ENCODE measurements at regions of chr12 and their contacts with region 1.

Region 1: GRCh38 chr12:50504798-50505385 is at the start of gene DIP2B:
- DNase-seq: peak; percentile 96
- H3K4me3 ChIP-seq: peak within 1 kb of the TSS; percentile 71
- H3K27ac ChIP-seq: peak within 1 kb of the TSS; percentile 89
- H3K4me1 ChIP-seq: peaks cover 12% of the 10 kb centered on the region
- H3K27me3 ChIP-seq: no peaks in the 10 kb centered on the region
- CTCF ChIP-seq: peak; percentile 86
- total RNA-seq, gene DIP2B: 34.3 to 36.8 TPM

Region 2: GRCh38 chr12:50362671-50363070 is 142.2 kb before region 1 on chr12:
- intact Hi-C with region 1: no loop called
- DNase-seq: no peak
- H3K4me3 ChIP-seq: no peak overlapping the region
- H3K27ac ChIP-seq: no peak overlapping the region
- H3K4me1 ChIP-seq: no peaks in the 10 kb centered on the region
- H3K27me3 ChIP-seq: no peaks in the 10 kb centered on the region
- CTCF ChIP-seq: no peak

Region 3: DNA sequence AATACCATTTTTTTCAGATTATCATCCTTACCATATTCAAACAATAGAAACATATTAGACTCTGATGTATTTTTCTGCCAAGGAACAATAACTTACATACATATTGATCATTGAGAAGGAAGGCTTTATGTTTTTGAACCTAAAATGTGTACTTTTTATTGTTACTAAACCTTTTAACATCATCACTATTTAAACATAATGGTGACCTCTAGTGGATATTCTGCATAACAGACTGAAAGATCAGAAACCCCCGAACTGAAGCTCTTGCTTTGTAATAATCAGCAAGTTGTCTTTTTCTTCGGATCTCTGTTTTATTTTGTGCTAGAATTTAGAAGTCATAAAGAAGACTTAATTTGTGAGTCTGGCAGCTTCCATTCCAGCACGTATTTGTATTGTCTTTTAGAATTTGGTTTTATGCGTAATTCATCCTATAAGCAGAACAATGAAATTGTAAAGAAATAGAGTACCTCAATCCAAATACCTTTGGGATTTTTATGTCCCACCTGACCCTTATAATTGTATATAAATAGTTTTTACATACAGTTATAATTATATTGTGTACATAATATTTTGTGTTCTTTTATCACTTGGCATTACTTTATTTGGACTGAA is 133.1 kb after region 1 on chr12:
- intact Hi-C with region 1: loop called (anchors 2 kb)
- DNase-seq: no peak
- H3K4me3 ChIP-seq: no peak overlapping the region
- H3K27ac ChIP-seq: no peak overlapping the region
- H3K4me1 ChIP-seq: peaks cover 9% of the 10 kb centered on the region
- H3K27me3 ChIP-seq: no peaks in the 10 kb centered on the region
- CTCF ChIP-seq: peak; percentile 62

Region 4: GRCh38 chr12:50734409-50735263 is 229.7 kb after region 1 on chr12:
- intact Hi-C with region 1: loop called (anchors 10 kb)
- DNase-seq: no peak
- H3K4me3 ChIP-seq: no peak overlapping the region
- H3K27ac ChIP-seq: no peak overlapping the region
- H3K4me1 ChIP-seq: no peaks in the 10 kb centered on the region
- H3K27me3 ChIP-seq: no peaks in the 10 kb centered on the region
- CTCF ChIP-seq: peak; percentile 11

Region 5: DNA sequence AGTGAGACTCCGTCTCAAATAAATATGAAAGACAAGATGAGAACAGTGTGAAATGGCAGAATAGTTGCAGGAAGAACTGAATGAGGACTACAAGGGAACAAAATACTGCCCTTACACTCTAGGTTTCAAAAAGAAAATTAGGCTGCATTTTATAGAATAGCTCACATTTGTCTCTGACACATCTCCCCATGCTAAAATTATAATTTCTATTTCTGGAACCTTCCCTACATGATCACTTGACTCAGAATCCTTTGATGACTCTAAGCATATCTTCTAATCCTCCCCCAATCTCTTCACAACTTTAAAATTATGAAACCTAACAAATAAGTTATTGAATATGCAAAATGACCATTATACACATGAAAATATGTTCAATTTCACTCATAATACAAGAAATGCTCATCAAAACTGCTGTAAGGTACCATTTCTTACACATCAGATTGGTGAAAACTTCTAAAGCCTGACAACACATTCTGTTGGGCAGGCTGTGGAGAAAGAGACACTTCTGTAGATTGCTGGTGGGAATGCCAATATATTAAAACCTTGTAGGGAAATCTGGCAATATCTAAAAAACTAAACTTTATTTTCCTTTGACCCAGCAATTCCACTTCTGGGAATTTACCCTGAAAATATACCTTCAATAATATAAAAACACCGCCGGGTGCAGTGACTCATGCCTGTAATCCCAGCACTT is 443.2 kb after region 1 on chr12:
- intact Hi-C with region 1: no loop called
- DNase-seq: no peak
- H3K4me3 ChIP-seq: no peak overlapping the region
- H3K27ac ChIP-seq: no peak overlapping the region
- H3K4me1 ChIP-seq: no peaks in the 10 kb centered on the region
- H3K27me3 ChIP-seq: no peaks in the 10 kb centered on the region
- CTCF ChIP-seq: no peak